Activated CD4-positive, alpha-beta T cell treated with anti-CD3 and anti-CD28 coated beads for 36 hours (primary cell): ENCODE measurements at regions of chr14 and their contacts with region 1.

Region 1: DNA sequence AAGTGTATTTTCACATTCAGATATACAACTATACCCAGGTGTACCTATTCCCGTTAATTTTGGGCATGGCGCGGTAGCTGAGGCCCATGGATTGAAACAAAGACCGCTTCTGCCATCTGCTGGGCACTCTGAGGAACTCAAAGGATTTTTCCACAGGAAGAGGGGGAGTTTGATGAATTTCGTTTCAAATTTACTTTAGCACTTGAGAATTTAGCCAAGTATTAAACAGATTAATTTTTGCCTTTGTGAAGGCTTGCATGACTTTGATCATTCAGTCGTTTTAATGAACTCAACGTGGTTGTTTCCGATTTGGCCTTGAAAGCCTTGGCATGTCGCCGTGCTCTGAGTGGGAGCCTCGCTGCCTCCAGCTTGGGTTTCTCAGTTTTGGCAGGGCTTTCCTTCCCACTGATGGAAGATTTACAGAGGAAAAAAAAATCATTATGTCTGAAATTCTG is 153.2 kb upstream of the DDHD1 start:
- DNase-seq: peak; percentile 68
- ATAC-seq: peak; percentile 63
- H3K4me3 Mint-ChIP-seq: peak overlapping the region; percentile 52
- H3K27ac Mint-ChIP-seq: no peak overlapping the region
- H3K4me1 Mint-ChIP-seq: peaks cover 5% of the 10 kb centered on the region
- H3K27me3 Mint-ChIP-seq: peaks cover 5% of the 10 kb centered on the region

Region 2: DNA sequence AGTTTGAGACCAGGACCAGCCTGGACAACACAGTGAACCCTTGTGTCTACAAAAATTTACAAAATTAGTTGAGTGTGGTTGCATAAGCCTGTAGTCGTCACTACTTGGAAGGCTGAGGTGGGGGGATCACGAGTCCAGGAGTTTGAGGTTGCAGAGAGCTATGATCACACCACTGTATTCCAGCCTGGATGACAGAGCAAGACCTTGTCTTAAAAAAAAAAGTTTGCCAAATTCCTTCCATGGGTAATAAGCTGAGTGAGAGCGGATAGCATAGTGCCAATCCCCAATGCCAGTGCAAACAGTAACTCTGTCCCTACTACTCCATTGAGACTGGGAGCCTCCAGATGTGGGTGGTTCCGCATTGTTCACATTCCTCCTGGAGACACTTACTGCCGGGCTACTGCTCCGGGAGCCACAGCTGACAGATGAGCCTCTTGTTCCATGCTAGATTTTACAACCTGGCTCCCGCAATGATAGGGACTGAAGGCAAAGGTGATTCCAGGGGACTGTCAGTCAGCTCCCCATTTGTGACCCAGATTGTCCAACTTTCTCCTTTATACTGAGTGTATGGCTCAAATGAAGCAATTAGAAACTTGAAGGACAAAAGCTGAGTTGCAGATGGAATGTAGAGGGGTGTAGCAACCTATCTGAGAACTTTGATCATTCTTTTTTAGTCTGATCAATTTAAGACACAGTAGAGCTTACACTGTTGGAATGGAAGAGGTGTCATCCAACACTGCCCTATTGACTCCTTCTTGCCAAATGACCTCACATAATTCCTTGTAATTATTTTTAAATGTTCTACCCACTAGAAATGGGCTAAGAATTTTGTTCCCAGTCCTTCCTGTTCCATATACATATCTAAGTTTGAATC is 1668.0 kb before region 1 on chr14:
- CTCF ChIA-PET with region 1: no interaction called
- POLR2A ChIA-PET with region 1: no interaction called
- intact Hi-C with region 1: no loop called
- DNase-seq: no peak
- ATAC-seq: no peak
- H3K4me3 Mint-ChIP-seq: no peak overlapping the region
- H3K27ac Mint-ChIP-seq: no peak overlapping the region
- H3K4me1 Mint-ChIP-seq: no peaks in the 10 kb centered on the region
- H3K27me3 Mint-ChIP-seq: peaks cover 9% of the 10 kb centered on the region

Region 3: GRCh38 chr14:52299692-52300278 is 1006.5 kb before region 1 on chr14:
- CTCF ChIA-PET with region 1: no interaction called
- POLR2A ChIA-PET with region 1: no interaction called
- intact Hi-C with region 1: loop called in 1 of 2 experiments (anchors 5 kb)
- DNase-seq: no peak
- ATAC-seq: peak; percentile 53
- H3K4me3 Mint-ChIP-seq: no peak overlapping the region
- H3K27ac Mint-ChIP-seq: no peak overlapping the region
- H3K4me1 Mint-ChIP-seq: no peaks in the 10 kb centered on the region
- H3K27me3 Mint-ChIP-seq: peaks cover 6% of the 10 kb centered on the region

Region 4: DNA sequence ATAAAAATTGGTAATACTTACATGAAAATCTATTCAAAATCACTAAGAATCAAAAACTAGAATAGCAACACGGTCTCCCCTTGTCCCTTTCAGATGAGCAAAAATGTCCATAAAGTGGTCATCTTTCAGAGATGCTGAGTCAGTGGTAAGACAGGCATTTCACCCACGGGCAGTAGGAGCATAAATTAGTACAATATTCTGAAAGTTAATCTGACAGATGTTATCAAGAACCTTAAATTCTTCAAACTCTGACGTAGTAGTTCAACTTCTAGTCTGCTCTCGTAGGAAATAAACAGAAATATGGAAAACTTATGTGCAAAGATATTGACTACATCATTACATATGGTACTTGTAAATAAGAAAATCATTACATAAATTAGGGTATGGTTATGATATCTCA is 481.8 kb before region 1 on chr14:
- CTCF ChIA-PET with region 1: interaction called, 15 read pairs
- POLR2A ChIA-PET with region 1: no interaction called
- intact Hi-C with region 1: loop called (anchors 1 kb)
- DNase-seq: no peak
- ATAC-seq: no peak
- H3K4me3 Mint-ChIP-seq: no peak overlapping the region
- H3K27ac Mint-ChIP-seq: no peak overlapping the region
- H3K4me1 Mint-ChIP-seq: peaks cover 3% of the 10 kb centered on the region
- H3K27me3 Mint-ChIP-seq: peaks cover 3% of the 10 kb centered on the region

Region 5: DNA sequence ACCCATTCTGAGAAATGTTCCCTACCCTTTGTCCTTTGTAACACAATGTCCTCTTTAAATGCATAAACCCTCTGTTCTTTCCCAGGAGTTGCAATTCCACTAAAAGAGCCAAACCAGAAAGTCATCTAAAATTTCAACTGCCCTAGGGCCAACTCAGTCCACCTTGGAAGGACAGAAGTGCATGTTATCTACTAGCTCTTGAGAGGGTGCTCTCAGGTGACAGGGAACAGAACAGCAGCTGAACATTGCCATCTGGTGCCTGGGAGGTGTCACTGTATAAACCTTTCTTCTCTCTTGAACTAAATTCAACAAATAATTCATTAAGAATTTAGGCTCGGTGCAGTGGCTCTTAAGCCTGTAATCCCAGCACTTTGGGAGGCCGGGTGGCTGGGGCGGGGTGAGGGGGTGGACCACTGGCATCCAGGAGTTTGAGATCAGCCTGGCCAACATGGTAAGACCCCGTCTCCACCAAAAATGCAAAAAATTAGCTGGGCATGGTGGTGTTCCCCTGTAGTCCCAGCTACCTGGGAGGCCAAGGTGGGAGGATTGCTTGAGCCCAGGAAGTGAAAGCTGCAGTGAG is 345.1 kb before region 1 on chr14:
- CTCF ChIA-PET with region 1: interaction called, 15 read pairs
- POLR2A ChIA-PET with region 1: no interaction called
- intact Hi-C with region 1: loop called in 1 of 2 experiments (anchors 2 kb)
- DNase-seq: peak; percentile 68
- ATAC-seq: peak; percentile 91
- H3K4me3 Mint-ChIP-seq: no peak overlapping the region
- H3K27ac Mint-ChIP-seq: no peak overlapping the region
- H3K4me1 Mint-ChIP-seq: peaks cover 6% of the 10 kb centered on the region
- H3K27me3 Mint-ChIP-seq: no peaks in the 10 kb centered on the region

Region 6: GRCh38 chr14:53055003-53055402 is 251.3 kb before region 1 on chr14:
- CTCF ChIA-PET with region 1: interaction called, 5 read pairs
- POLR2A ChIA-PET with region 1: no interaction called
- intact Hi-C with region 1: loop called (anchors 2 to 10 kb)
- DNase-seq: no peak
- ATAC-seq: peak; percentile 74
- H3K4me3 Mint-ChIP-seq: no peak overlapping the region
- H3K27ac Mint-ChIP-seq: no peak overlapping the region
- H3K4me1 Mint-ChIP-seq: peaks cover 6% of the 10 kb centered on the region
- H3K27me3 Mint-ChIP-seq: no peaks in the 10 kb centered on the region

Region 7: GRCh38 chr14:53231201-53231600 is 75.1 kb before region 1 on chr14:
- CTCF ChIA-PET with region 1: no interaction called
- POLR2A ChIA-PET with region 1: no interaction called
- intact Hi-C with region 1: no loop called
- DNase-seq: no peak
- ATAC-seq: no peak
- H3K4me3 Mint-ChIP-seq: no peak overlapping the region
- H3K27ac Mint-ChIP-seq: no peak overlapping the region
- H3K4me1 Mint-ChIP-seq: no peaks in the 10 kb centered on the region
- H3K27me3 Mint-ChIP-seq: no peaks in the 10 kb centered on the region

Region 8: GRCh38 chr14:53295985-53296582 is 10.2 kb before region 1 on chr14:
- CTCF ChIA-PET with region 1: interaction called, 51 read pairs
- POLR2A ChIA-PET with region 1: no interaction called
- intact Hi-C with region 1: no loop called
- DNase-seq: peak; percentile 27
- ATAC-seq: peak; percentile 33
- H3K4me3 Mint-ChIP-seq: no peak overlapping the region
- H3K27ac Mint-ChIP-seq: no peak overlapping the region
- H3K4me1 Mint-ChIP-seq: no peaks in the 10 kb centered on the region
- H3K27me3 Mint-ChIP-seq: no peaks in the 10 kb centered on the region

Region 9: GRCh38 chr14:53325176-53325806 is 19.0 kb after region 1 on chr14:
- CTCF ChIA-PET with region 1: interaction called, 12 read pairs
- POLR2A ChIA-PET with region 1: no interaction called
- intact Hi-C with region 1: no loop called
- DNase-seq: no peak
- ATAC-seq: peak; percentile 30
- H3K4me3 Mint-ChIP-seq: no peak overlapping the region
- H3K27ac Mint-ChIP-seq: no peak overlapping the region
- H3K4me1 Mint-ChIP-seq: peaks cover 4% of the 10 kb centered on the region
- H3K27me3 Mint-ChIP-seq: no peaks in the 10 kb centered on the region

Region 10: GRCh38 chr14:53608396-53608795 is 302.1 kb after region 1 on chr14:
- CTCF ChIA-PET with region 1: no interaction called
- POLR2A ChIA-PET with region 1: no interaction called
- intact Hi-C with region 1: no loop called
- DNase-seq: no peak
- ATAC-seq: no peak
- H3K4me3 Mint-ChIP-seq: no peak overlapping the region
- H3K27ac Mint-ChIP-seq: no peak overlapping the region
- H3K4me1 Mint-ChIP-seq: no peaks in the 10 kb centered on the region
- H3K27me3 Mint-ChIP-seq: no peaks in the 10 kb centered on the region